Heart left ventricle (tissue), 16 donors: ENCODE measurements at regions of chr3 and their contacts with region 1.

Region 1: GRCh38 chr3:171162986-171163723 is 136.6 kb upstream of the SLC2A2 start:
- DNase-seq: no peak
- ATAC-seq: no peak
- H3K4me3 ChIP-seq: no peak overlapping the region
- H3K27ac ChIP-seq: no peak overlapping the region
- H3K4me1 ChIP-seq: peaks cover 0 to 2% (median 0%) of the 10 kb centered on the region in 12 donors
- H3K27me3 ChIP-seq: no peaks in the 10 kb centered on the region
- CTCF ChIP-seq: peak in 11 of 12 donors; percentile 13 to 62 (median 37)
- POLR2A ChIP-seq: no peak

Region 2: DNA sequence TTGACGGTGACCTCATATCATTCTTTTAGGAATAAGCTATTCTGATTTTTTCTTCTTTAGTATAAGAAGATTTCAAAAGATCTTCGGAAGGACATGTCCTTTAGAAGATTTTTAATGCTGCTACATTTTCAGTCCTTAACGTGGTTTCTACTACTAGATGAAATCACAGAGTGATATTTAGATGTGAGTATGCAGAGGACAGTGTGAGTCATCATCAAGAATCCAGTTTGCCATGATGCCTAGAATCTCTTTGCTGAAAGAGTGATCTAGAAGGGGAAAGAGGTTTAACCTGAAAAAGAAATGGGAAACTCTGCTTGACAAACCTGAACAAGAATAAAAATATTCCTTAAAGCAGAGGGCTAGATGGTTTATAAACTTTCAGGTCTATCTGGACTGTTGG is 620.5 kb before region 1 on chr3:
- intact Hi-C with region 1: loop called in 1 of 10 experiments (anchors 10 kb)
- DNase-seq: no peak
- ATAC-seq: no peak
- H3K4me3 ChIP-seq: no peak overlapping the region
- H3K27ac ChIP-seq: no peak overlapping the region
- H3K4me1 ChIP-seq: no peaks in the 10 kb centered on the region
- H3K27me3 ChIP-seq: peaks cover 0 to 8% (median 0%) of the 10 kb centered on the region in 9 donors
- CTCF ChIP-seq: no peak
- POLR2A ChIP-seq: no peak

Region 3: DNA sequence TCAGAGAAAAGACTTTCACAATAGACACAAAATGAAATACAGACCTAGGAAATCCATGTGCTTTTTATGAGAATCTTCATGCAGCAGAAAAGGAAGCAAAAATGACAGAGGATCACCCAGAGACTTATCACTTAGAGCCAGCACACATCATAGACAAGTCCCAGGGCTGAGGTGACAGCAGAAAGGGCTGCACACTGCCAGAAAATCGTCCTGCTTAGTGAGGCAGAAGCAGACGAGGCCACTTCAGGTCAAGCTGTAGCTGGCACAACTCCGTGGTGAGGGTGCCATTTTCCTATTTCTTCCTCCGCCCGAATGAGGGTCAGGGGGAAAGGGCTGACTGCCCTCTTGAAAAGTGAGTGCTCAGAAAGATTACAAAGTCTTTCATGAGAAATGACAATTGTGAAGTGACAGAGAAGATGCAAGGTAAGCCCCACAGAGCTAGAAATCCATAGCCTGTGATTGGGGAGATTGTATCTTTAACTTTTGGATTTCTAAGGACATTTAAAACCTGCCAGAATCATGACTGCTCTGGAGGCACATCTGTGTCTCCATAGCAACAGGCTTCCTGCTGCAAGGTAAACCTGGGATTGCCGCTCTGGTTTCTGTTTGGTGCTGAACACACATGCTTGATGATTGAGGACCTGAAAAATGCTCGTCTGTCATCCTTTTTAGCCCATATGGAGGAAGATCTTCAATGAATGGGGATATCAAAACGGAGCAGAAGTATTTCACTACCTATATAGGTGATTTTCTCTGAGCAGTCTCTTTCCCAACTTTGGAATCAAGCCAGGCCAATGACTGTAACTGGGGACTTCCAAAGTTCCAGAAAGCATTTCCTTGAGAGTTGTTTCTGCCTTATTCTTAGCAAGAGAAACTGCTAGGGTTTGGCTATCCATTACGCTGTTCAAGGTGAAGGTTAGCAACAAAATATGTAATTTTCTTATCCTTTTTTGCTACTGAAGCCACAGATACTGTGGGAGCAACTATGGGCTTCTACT is 393.3 kb after region 1 on chr3:
- intact Hi-C with region 1: loop called in 5 of 10 experiments (anchors 10 kb)
- DNase-seq: peak in 4 of 5 donors; percentile 21 to 66 (median 48)
- ATAC-seq: peak; percentile 70 to 94 (median 91)
- H3K4me3 ChIP-seq: no peak overlapping the region
- H3K27ac ChIP-seq: peak overlapping the region in 1 of 12 donors; percentile 31
- H3K4me1 ChIP-seq: peaks cover 0 to 19% (median 0%) of the 10 kb centered on the region in 12 donors
- H3K27me3 ChIP-seq: no peaks in the 10 kb centered on the region
- CTCF ChIP-seq: no peak
- POLR2A ChIP-seq: no peak